Naive thymus-derived CD8-positive, alpha-beta T cell (primary cell): ENCODE measurements at regions of chr6 and their contacts with region 1.

Region 1: GRCh38 chr6:139375232-139376016 is 976 bp upstream of the CITED2 start:
- DNase-seq: peak in 9 of 10 donors; percentile 69 to 92 (median 83)
- ATAC-seq: peak; percentile 62 to 73
- H3K4me3 Mint-ChIP-seq: peak overlapping the region; percentile 91 to 100 (median 100)
- H3K27ac Mint-ChIP-seq: peak overlapping the region; percentile 93 to 100 (median 99)
- H3K4me1 Mint-ChIP-seq: peaks cover 15 to 39% (median 28%) of the 10 kb centered on the region in 4 donors
- H3K27me3 Mint-ChIP-seq: no peaks in the 10 kb centered on the region

Region 2: DNA sequence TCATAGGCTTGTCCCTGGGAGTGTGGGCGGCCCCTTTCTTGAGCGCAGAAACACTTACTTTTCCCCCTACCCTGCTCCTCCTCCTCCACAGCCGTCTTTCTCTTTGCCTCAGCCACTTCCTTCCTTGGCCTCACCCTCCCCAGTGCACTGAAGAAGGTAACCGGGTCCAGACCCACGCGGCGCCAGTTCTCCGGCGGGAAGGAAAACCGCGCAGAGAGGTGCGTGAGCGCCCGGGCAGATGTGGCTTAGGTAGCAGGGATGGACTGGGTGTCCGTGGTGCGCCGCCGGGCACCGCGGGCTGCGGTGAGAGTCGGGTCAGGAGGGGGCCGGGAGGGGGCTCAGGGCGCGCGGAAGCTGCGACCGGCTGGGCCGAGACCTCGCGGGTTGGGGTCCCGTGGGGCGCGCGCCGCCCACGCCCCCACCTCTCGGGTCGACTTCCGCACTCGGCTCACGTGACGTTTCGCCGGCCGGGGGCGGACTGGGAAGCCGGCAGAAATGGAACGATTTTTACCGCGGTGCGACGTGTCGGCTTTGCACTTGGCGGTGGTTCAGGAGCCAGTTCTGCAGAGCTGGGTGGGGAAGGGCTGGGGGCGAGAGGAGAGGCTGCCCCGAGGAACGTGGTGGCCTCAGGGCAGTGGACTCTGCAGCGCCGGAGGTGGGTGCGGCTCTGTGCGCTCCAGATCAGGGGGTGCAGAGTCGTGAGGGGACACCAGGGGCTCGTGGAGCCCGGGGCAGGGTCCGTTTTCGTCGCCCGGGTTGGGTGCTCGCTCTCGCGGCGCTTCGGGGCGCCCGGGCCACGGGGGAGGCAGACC is 346.6 kb before region 1 on chr6 and contains the start of gene ABRACL:
- POLR2A ChIA-PET with region 1: interaction called, 23 read pairs
- DNase-seq: peak; percentile 54 to 88 (median 74)
- ATAC-seq: peak; percentile 83 to 89
- H3K4me3 Mint-ChIP-seq: peak within 1 kb of the TSS in 7 of 10 donors; percentile 87 to 97 (median 93)
- H3K27ac Mint-ChIP-seq: peak within 1 kb of the TSS; percentile 88 to 97 (median 96)
- H3K4me1 Mint-ChIP-seq: peaks cover 16 to 33% (median 20%) of the 10 kb centered on the region in 4 donors
- H3K27me3 Mint-ChIP-seq: no peaks in the 10 kb centered on the region
- polyA plus RNA-seq, gene ABRACL: 210 to 228 (median 217) TPM

Region 3: GRCh38 chr6:139124887-139125672 is 250.3 kb before region 1 on chr6:
- POLR2A ChIA-PET with region 1: interaction called, 28 read pairs
- DNase-seq: peak; percentile 37 to 92 (median 80)
- ATAC-seq: peak; percentile 91 to 100
- H3K4me3 Mint-ChIP-seq: peak overlapping the region; percentile 24 to 78 (median 70)
- H3K27ac Mint-ChIP-seq: peak overlapping the region; percentile 35 to 97 (median 94)
- H3K4me1 Mint-ChIP-seq: peaks cover 30 to 66% (median 52%) of the 10 kb centered on the region in 4 donors
- H3K27me3 Mint-ChIP-seq: no peaks in the 10 kb centered on the region

Region 4: DNA sequence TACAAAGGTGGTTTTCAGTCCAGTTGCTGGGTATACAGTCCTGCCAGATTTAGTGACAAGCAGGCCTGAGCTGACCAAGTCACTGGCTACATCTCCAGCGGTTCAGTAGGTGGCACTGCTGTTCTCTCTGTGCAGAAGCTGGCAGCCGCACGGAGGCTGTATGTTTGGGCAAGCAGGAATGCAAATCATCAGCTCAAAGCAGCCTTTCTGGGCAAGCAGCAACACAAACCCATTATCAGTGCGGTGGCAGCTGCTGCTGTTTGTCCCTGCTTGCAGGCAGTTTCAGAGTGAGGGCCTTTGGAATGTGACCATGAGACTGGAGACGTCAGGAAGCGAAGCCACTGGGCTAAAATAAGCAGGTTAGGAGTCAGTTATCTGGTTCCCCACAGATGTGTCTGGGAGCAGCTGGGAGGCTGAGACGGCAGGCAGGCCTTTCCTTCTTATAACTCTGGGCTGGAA is 156.1 kb before region 1 on chr6:
- POLR2A ChIA-PET with region 1: interaction called, 15 read pairs
- DNase-seq: peak; percentile 36 to 86 (median 65)
- ATAC-seq: peak; percentile 100
- H3K4me3 Mint-ChIP-seq: peak overlapping the region in 5 of 10 donors; percentile 37 to 77 (median 46)
- H3K27ac Mint-ChIP-seq: peak overlapping the region; percentile 58 to 97 (median 88)
- H3K4me1 Mint-ChIP-seq: peaks cover 4 to 14% (median 10%) of the 10 kb centered on the region in 4 donors
- H3K27me3 Mint-ChIP-seq: no peaks in the 10 kb centered on the region

Region 5: GRCh38 chr6:139364302-139364981 is 11.0 kb before region 1 on chr6:
- POLR2A ChIA-PET with region 1: interaction called, 27 read pairs
- DNase-seq: peak in 3 of 10 donors; percentile 72 to 81 (median 72)
- ATAC-seq: peak; percentile 43 to 60
- H3K4me3 Mint-ChIP-seq: peak overlapping the region in 1 of 10 donors; percentile 44
- H3K27ac Mint-ChIP-seq: peak overlapping the region; percentile 4 to 73 (median 38)
- H3K4me1 Mint-ChIP-seq: peaks cover 12 to 50% (median 46%) of the 10 kb centered on the region in 4 donors
- H3K27me3 Mint-ChIP-seq: no peaks in the 10 kb centered on the region